Pancreas (tissue), 10 donors: ENCODE measurements at regions of chr6 and their contacts with region 1.

Region 1: DNA sequence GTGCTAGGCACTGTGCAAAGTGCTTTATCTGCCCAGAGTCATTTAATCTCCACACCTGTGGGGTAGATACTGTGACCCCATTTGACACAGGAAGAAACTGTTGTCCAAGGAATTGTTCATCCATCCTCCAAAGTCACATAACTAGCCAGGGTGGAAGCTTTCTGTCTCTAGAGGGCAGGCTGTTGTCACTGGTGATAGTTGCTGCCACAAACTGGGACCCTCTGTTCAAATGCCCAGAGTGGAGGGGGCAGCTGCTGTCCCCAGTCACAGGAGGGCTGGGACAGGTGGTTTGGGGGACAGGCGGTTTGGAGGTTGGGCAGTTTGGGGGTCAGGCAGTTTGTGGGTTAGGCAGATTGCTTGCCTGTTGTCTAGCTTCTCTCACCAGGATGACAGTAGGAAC is 16.1 kb upstream of the TMEM242 start:
- DNase-seq: no peak
- ATAC-seq: no peak
- H3K4me3 ChIP-seq: no peak overlapping the region
- H3K27ac ChIP-seq: no peak overlapping the region
- H3K4me1 ChIP-seq: no peaks in the 10 kb centered on the region
- H3K27me3 ChIP-seq: no peaks in the 10 kb centered on the region
- CTCF ChIP-seq: no peak

Region 2: GRCh38 chr6:157169656-157170055 is 169.8 kb before region 1 on chr6:
- intact Hi-C with region 1: no loop called
- DNase-seq: no peak
- ATAC-seq: no peak
- H3K4me3 ChIP-seq: no peak overlapping the region
- H3K27ac ChIP-seq: no peak overlapping the region
- H3K4me1 ChIP-seq: peaks cover 0 to 8% (median 6%) of the 10 kb centered on the region in 3 donors
- H3K27me3 ChIP-seq: no peaks in the 10 kb centered on the region
- CTCF ChIP-seq: no peak

Region 3: GRCh38 chr6:157667211-157668008 is 328.0 kb after region 1 on chr6:
- intact Hi-C with region 1: loop called in 1 of 3 experiments (anchors 10 kb)
- DNase-seq: peak in 2 of 6 donors; percentile 31 to 53
- ATAC-seq: peak in 3 of 4 donors; percentile 86 to 93 (median 87)
- H3K4me3 ChIP-seq: no peak overlapping the region
- H3K27ac ChIP-seq: no peak overlapping the region
- H3K4me1 ChIP-seq: no peaks in the 10 kb centered on the region
- H3K27me3 ChIP-seq: no peaks in the 10 kb centered on the region
- CTCF ChIP-seq: peak; percentile 69 to 85 (median 72)

Region 4: GRCh38 chr6:157688960-157689599 is 349.6 kb after region 1 on chr6:
- intact Hi-C with region 1: no loop called
- DNase-seq: no peak
- ATAC-seq: no peak
- H3K4me3 ChIP-seq: no peak overlapping the region
- H3K27ac ChIP-seq: no peak overlapping the region
- H3K4me1 ChIP-seq: no peaks in the 10 kb centered on the region
- H3K27me3 ChIP-seq: no peaks in the 10 kb centered on the region
- CTCF ChIP-seq: no peak